ENCODE measurements at regions of chrX and their contacts with region 1.

Region 1: DNA sequence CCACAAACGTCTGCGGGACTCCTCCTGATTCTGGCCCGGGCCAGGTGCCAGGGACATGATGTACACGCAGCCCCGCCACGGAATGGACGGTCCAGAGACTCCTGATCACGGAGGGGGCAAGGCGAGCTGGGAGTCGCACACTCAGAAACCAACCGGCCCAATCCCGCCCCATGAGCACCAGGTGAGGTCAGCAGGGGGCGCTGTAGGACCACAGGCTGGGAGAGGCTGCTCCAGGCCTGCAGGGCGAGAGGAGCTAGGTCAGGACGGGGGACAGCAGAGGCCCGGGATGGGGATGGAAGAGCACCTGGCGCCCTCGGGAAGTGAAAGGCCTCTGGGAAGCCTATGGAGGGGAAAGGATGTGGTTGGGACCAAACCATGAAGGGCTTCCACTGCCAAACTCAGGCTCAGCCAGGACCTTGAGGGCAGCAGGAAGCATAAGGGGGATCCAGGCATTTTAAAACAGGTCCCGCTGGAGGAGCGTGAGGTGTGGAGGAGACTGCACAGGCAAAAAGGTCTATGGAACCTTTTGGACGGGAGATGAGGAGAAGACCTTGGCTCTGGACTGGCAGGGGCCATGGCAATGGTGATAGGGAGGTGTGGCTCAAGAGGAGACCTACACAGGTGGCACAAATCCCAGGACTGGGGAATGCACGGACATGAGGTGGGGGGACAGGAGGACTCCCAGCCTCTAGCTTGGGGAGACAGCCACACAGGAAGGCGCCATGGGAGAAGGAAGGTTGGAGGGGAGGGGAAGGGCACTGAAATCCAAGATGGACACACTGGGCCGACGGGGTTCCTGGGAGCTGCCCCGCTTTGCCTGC is 79.2 kb downstream of the MTMR1 start:
- DNase-seq: peak; percentile 39
- H3K4me3 ChIP-seq: no peak overlapping the region
- H3K27ac ChIP-seq: no peak overlapping the region
- H3K4me1 ChIP-seq: peaks cover 2% of the 10 kb centered on the region
- H3K27me3 ChIP-seq: no peaks in the 10 kb centered on the region
- CTCF ChIP-seq: peak; percentile 59 to 81

Region 2: DNA sequence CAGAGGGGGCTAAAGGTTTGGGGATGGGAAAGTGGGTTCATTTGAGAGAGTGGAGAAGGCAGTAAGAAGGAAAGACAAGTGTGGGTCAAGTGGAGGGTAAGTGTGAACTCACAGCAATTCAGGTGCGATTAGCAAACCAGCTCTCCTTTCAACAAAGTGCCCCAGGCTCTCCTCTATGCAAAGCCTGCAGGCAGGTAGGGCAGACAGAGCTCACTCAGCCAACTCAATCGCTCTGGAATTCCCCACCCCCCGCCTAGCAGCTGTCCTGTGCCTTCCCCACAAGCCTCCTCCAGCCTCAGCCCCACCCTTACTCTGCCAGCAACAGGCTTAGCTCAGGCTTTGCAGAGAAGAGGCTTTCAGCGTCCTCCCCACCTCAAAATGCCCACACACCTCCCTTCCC is 424.0 kb before region 1 on chrX:
- CTCF ChIA-PET with region 1: interaction called, 14 read pairs
- dilution Hi-C with region 1: no loop called
- in situ Hi-C with region 1: no loop called
- intact Hi-C with region 1: no loop called
- DNase-seq: peak; percentile 43
- H3K4me3 ChIP-seq: no peak overlapping the region
- H3K27ac ChIP-seq: no peak overlapping the region
- H3K4me1 ChIP-seq: no peaks in the 10 kb centered on the region
- H3K27me3 ChIP-seq: no peaks in the 10 kb centered on the region
- CTCF ChIP-seq: no peak

Region 3: GRCh38 chrX:150525061-150525919 is 247.1 kb before region 1 on chrX:
- CTCF ChIA-PET with region 1: no interaction called
- dilution Hi-C with region 1: no loop called
- in situ Hi-C with region 1: no loop called
- intact Hi-C with region 1: no loop called
- DNase-seq: no peak
- H3K4me3 ChIP-seq: no peak overlapping the region
- H3K27ac ChIP-seq: no peak overlapping the region
- H3K4me1 ChIP-seq: no peaks in the 10 kb centered on the region
- H3K27me3 ChIP-seq: no peaks in the 10 kb centered on the region
- CTCF ChIP-seq: no peak

Region 4: DNA sequence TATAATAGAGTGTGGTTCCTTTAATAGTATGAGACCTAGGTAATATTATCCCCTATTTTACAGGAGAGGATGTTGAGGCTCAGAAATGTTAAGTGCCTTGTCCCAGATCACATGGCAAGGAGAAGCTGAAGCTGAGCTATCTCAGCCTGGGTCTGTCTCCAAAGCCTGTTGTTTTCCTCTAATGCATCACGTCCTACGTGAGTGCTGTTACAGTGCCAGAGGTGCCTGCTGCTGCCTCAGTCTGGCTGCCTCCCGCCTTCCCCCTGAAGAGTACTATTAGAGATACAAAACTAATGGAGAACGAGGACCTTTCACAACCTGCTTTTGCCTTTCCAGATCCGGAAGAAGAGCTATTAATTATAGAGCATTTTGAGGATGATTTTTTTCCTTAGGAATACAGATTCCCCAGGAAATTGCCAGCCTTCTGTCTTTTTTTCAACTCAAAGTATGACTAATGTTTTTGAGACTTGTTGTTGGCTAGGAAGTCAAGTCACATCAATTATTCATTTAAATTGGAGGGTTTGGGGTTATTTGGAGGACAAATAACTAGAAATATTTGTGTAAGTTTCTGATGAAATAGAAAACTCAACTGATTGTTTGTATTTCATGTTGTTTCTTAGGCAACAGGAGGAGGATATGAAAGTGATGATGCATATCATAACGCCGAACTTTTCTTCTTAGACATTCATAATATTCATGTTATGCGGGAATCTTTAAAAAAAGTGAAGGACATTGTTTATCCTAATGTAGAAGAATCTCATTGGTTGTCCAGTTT is 123.1 kb before region 1 on chrX:
- CTCF ChIA-PET with region 1: no interaction called
- dilution Hi-C with region 1: no loop called
- in situ Hi-C with region 1: no loop called
- intact Hi-C with region 1: no loop called
- DNase-seq: no peak
- H3K4me3 ChIP-seq: no peak overlapping the region
- H3K27ac ChIP-seq: peak overlapping the region; percentile 4
- H3K4me1 ChIP-seq: peaks cover 7% of the 10 kb centered on the region
- H3K27me3 ChIP-seq: no peaks in the 10 kb centered on the region
- CTCF ChIP-seq: no peak

Region 5: DNA sequence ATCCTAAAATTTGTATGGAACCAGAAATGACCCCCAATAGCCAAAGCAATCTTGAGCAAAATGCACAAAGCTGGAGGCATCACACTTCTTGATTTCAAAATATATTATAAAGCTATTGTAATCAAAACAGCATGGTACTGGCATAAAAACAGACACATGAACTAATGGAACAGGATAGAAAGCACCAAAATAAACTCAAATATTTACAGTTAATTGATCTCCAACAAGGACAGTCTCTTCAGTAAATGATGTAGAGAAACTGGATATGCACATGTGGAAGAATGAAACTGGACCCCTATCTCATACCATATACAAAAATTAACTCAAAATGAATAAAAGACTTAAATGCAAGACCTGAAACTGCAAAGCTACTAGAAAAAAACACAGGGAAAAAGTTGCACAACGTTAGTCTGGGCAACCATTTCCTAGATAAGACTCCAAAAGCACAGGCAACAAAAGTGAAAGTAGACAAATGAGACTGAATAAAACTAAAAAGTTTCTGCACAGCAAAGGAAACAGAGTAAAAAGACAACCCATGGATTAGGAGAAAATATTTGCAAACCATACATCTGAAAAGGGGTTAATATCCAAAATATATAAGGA is 61.2 kb after region 1 on chrX:
- CTCF ChIA-PET with region 1: no interaction called
- dilution Hi-C with region 1: loop called (anchors 5 kb)
- in situ Hi-C with region 1: no loop called
- intact Hi-C with region 1: no loop called
- DNase-seq: no peak
- H3K4me3 ChIP-seq: no peak overlapping the region
- H3K27ac ChIP-seq: no peak overlapping the region
- H3K4me1 ChIP-seq: no peaks in the 10 kb centered on the region
- H3K27me3 ChIP-seq: no peaks in the 10 kb centered on the region
- CTCF ChIP-seq: no peak

Region 6: GRCh38 chrX:150898343-150899190 is 126.2 kb after region 1 on chrX and contains the start of gene CD99L2:
- CTCF ChIA-PET with region 1: no interaction called
- dilution Hi-C with region 1: no loop called
- in situ Hi-C with region 1: no loop called
- intact Hi-C with region 1: loop called (anchors 1 kb)
- DNase-seq: peak; percentile 82
- H3K4me3 ChIP-seq: peak within 1 kb of the TSS; percentile 66 to 70 (median 70)
- H3K27ac ChIP-seq: peak within 1 kb of the TSS; percentile 72
- H3K4me1 ChIP-seq: peaks cover 7% of the 10 kb centered on the region
- H3K27me3 ChIP-seq: no peaks in the 10 kb centered on the region
- CTCF ChIP-seq: no peak
- total RNA-seq, gene CD99L2: 14.9 to 26.3 TPM

Region 7: GRCh38 chrX:150982788-150983520 is 210.6 kb after region 1 on chrX and contains the start of gene HMGB3:
- CTCF ChIA-PET with region 1: no interaction called
- dilution Hi-C with region 1: loop called (anchors 25 kb)
- in situ Hi-C with region 1: no loop called
- intact Hi-C with region 1: loop called (anchors 2 kb)
- DNase-seq: peak; percentile 91
- H3K4me3 ChIP-seq: peak within 1 kb of the TSS; percentile 58 to 64 (median 63)
- H3K27ac ChIP-seq: peak within 1 kb of the TSS; percentile 35
- H3K4me1 ChIP-seq: peaks cover 6% of the 10 kb centered on the region
- H3K27me3 ChIP-seq: no peaks in the 10 kb centered on the region
- CTCF ChIP-seq: no peak
- total RNA-seq, gene HMGB3: 58.5 to 114 TPM

Region 8: DNA sequence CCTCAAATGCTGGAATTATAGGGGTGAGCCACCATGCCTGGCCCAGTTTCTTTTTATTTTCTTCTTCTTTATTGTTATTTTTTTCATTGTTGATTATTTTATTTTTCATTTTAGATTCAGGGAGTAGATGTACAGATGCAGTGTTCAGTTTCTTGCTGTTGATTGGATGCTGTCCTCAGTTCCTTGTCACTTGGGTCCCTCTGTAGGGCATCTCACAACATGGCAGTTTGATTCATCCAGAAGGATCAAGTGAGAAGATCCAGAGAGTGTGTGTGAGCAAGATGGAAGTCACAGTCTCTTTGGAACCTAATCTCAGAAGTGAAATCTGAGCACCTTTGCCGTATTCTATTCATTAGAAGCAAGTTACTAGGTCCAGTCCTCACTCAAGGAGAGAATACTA is 231.7 kb after region 1 on chrX:
- CTCF ChIA-PET with region 1: no interaction called
- dilution Hi-C with region 1: loop called (anchors 25 kb)
- in situ Hi-C with region 1: no loop called
- intact Hi-C with region 1: loop called (anchors 1 kb)
- DNase-seq: no peak
- H3K4me3 ChIP-seq: no peak overlapping the region
- H3K27ac ChIP-seq: no peak overlapping the region
- H3K4me1 ChIP-seq: no peaks in the 10 kb centered on the region
- H3K27me3 ChIP-seq: no peaks in the 10 kb centered on the region
- CTCF ChIP-seq: no peak

Region 9: GRCh38 chrX:151082076-151082948 is 310.0 kb after region 1 on chrX:
- CTCF ChIA-PET with region 1: interaction called, 14 read pairs
- dilution Hi-C with region 1: loop called (anchors 5 kb)
- in situ Hi-C with region 1: loop called (anchors 5 to 10 kb)
- intact Hi-C with region 1: loop called (anchors 1 kb)
- DNase-seq: peak; percentile 33
- H3K4me3 ChIP-seq: peak overlapping the region in 1 of 3 experiments; percentile 20
- H3K27ac ChIP-seq: no peak overlapping the region
- H3K4me1 ChIP-seq: peaks cover 4% of the 10 kb centered on the region
- H3K27me3 ChIP-seq: no peaks in the 10 kb centered on the region
- CTCF ChIP-seq: peak; percentile 50 to 76

Measured in mammary epithelial cell (primary cell).